Naive thymus-derived CD4-positive, alpha-beta T cell (primary cell): ENCODE measurements at regions of chr1 and their contacts with region 1.

Region 1: DNA sequence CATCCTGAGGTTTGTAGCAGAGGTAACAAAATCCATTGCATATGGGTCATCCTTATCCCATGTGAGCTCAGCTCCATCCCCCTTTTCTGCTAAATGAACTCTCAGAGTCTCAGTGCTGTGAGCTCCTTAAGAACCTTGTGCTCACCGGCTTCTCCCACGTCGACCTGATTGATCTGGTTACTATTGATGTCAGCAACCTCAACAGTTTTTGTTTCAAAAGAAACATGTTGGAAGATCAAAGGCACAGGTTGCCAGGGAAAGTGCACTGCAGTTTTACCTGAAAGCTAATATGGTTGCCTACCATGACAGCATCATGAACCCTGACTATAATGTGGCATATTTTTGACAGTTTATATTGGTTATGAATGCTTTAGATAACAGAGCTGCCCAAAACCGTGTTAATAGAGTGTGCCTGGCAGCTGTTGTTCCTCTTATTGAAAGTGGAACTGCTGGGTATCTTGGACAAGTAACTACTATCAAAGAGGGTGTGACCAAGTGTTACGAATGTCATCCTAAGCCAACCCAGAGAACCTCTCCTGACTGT is 131.4 kb downstream of the HS2ST1 start:
- DNase-seq: peak; percentile 7 to 91 (median 85)
- ATAC-seq: peak; percentile 82
- H3K4me3 ChIP-seq: no peak overlapping the region
- H3K4me3 Mint-ChIP-seq: peak overlapping the region; percentile 31 to 87 (median 64)
- H3K27ac ChIP-seq: peak overlapping the region; percentile 58
- H3K27ac Mint-ChIP-seq: peak overlapping the region; percentile 52 to 100 (median 94)
- H3K4me1 ChIP-seq: peaks cover 10 to 21% of the 10 kb centered on the region in 2 donors
- H3K4me1 Mint-ChIP-seq: peaks cover 24 to 72% (median 60%) of the 10 kb centered on the region in 7 donors
- H3K27me3 ChIP-seq: no peaks in the 10 kb centered on the region
- H3K27me3 Mint-ChIP-seq: no peaks in the 10 kb centered on the region

Region 2: GRCh38 chr1:86389307-86389706 is 656.5 kb before region 1 on chr1:
- CTCF ChIA-PET with region 1: no interaction called
- POLR2A ChIA-PET with region 1: no interaction called
- intact Hi-C with region 1: loop called in 1 of 2 experiments (anchors 5 kb)
- DNase-seq: peak in 6 of 9 donors; percentile 16 to 58 (median 40)
- ATAC-seq: peak; percentile 70
- H3K4me3 ChIP-seq: peak overlapping the region; percentile 21
- H3K4me3 Mint-ChIP-seq: peak overlapping the region; percentile 26 to 80 (median 74)
- H3K27ac ChIP-seq: peak overlapping the region; percentile 35
- H3K27ac Mint-ChIP-seq: peak overlapping the region; percentile 46 to 99 (median 85)
- H3K4me1 ChIP-seq: peaks cover 13% of the 10 kb centered on the region in 2 donors
- H3K4me1 Mint-ChIP-seq: peaks cover 24 to 59% (median 52%) of the 10 kb centered on the region in 7 donors
- H3K27me3 ChIP-seq: no peaks in the 10 kb centered on the region
- H3K27me3 Mint-ChIP-seq: no peaks in the 10 kb centered on the region

Region 3: GRCh38 chr1:86395771-86396497 is 649.9 kb before region 1 on chr1 and contains the start of gene ODF2L:
- CTCF ChIA-PET with region 1: no interaction called
- POLR2A ChIA-PET with region 1: no interaction called
- intact Hi-C with region 1: loop called in 1 of 2 experiments (anchors 5 kb)
- DNase-seq: peak; percentile 73 to 92 (median 90)
- ATAC-seq: peak; percentile 100
- H3K4me3 ChIP-seq: peak within 1 kb of the TSS; percentile 80
- H3K4me3 Mint-ChIP-seq: peak within 1 kb of the TSS; percentile 90 to 100 (median 98)
- H3K27ac ChIP-seq: peak within 1 kb of the TSS; percentile 90
- H3K27ac Mint-ChIP-seq: peak within 1 kb of the TSS; percentile 94 to 99 (median 98)
- H3K4me1 ChIP-seq: peaks cover 17 to 20% of the 10 kb centered on the region in 2 donors
- H3K4me1 Mint-ChIP-seq: peaks cover 23 to 70% (median 58%) of the 10 kb centered on the region in 7 donors
- H3K27me3 ChIP-seq: no peaks in the 10 kb centered on the region
- H3K27me3 Mint-ChIP-seq: peaks cover 0 to 7% (median 0%) of the 10 kb centered on the region in 5 donors
- total RNA-seq, gene ODF2L: 50.3 to 75.3 (median 52.2) TPM

Region 4: DNA sequence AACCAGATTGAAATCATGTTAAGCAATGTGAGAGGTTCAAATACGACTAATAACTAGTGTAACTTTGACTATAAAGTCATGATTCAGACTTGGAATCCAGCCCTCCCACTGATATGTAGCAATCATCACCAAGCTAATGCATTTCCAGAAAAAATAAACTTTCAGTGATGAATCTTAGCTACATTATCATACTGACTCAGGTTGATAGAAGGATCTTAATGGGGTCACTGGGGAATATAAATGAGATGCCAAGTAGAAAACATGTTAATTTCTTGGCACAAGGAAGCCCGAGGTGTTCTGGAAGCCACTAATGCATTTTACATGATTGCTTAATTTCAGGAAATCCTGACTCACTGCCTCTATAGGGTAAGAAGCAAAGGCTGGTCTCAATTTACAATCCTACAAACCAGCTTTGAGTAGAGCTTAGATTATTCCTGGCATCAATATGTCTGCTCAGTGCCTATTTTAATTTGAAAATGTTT is 199.6 kb before region 1 on chr1:
- CTCF ChIA-PET with region 1: no interaction called
- POLR2A ChIA-PET with region 1: no interaction called
- intact Hi-C with region 1: no loop called
- DNase-seq: no peak
- ATAC-seq: no peak
- H3K4me3 ChIP-seq: no peak overlapping the region
- H3K4me3 Mint-ChIP-seq: no peak overlapping the region
- H3K27ac ChIP-seq: no peak overlapping the region
- H3K27ac Mint-ChIP-seq: no peak overlapping the region
- H3K4me1 ChIP-seq: no peaks in the 10 kb centered on the region
- H3K4me1 Mint-ChIP-seq: peaks cover 0 to 2% (median 0%) of the 10 kb centered on the region in 7 donors
- H3K27me3 ChIP-seq: no peaks in the 10 kb centered on the region
- H3K27me3 Mint-ChIP-seq: peaks cover 0 to 3% (median 0%) of the 10 kb centered on the region in 5 donors

Region 5: DNA sequence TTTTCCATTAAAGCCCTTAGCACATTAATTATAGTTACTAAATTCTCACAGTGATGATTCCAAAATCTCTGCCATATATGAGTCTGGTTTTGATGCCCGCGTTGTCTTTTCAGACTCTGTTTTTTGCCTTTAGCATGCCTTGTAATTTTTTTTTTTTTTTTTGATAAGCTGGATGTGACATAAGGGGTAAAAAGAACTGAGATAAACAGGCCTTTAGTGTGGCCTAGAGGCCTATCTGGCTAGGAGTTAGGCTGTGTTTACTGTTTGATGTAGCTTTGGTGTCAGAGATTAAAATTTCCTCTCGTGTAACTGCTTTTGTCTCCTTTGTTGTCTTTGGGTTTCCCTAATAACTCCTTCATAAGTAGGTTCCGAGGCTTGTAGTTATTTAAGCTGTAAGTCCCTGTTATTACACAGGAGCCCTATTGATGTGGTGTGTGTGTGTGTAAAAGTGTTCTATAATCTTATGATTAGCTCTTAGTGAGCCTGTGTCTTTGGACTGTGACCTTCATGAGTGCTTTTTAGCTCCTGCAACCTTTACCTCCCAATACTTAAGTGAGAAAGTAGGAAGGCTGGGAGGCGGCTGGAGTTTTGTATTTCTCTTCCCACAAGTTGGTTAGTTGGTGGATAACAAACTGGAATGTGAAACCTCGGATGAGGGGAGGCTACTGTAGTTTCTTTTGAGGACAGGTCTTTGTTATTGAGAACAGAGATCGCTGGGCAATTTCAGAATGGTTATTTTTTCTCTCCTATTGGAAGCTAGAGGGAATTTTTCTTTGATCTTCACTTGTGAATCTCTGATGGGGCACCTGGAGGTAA is 112.1 kb before region 1 on chr1:
- CTCF ChIA-PET with region 1: no interaction called
- POLR2A ChIA-PET with region 1: no interaction called
- intact Hi-C with region 1: no loop called
- DNase-seq: peak in 3 of 9 donors; percentile 13 to 26 (median 26)
- ATAC-seq: peak; percentile 59
- H3K4me3 ChIP-seq: no peak overlapping the region
- H3K4me3 Mint-ChIP-seq: peak overlapping the region in 5 of 10 donors; percentile 5 to 38 (median 25)
- H3K27ac ChIP-seq: no peak overlapping the region
- H3K27ac Mint-ChIP-seq: peak overlapping the region in 8 of 9 donors; percentile 3 to 82 (median 58)
- H3K4me1 ChIP-seq: peaks cover 0 to 10% of the 10 kb centered on the region in 2 donors
- H3K4me1 Mint-ChIP-seq: peaks cover 4 to 54% (median 36%) of the 10 kb centered on the region in 7 donors
- H3K27me3 ChIP-seq: no peaks in the 10 kb centered on the region
- H3K27me3 Mint-ChIP-seq: no peaks in the 10 kb centered on the region